ENCODE measurements at regions of chr22 and their contacts with region 1.

Region 1: DNA sequence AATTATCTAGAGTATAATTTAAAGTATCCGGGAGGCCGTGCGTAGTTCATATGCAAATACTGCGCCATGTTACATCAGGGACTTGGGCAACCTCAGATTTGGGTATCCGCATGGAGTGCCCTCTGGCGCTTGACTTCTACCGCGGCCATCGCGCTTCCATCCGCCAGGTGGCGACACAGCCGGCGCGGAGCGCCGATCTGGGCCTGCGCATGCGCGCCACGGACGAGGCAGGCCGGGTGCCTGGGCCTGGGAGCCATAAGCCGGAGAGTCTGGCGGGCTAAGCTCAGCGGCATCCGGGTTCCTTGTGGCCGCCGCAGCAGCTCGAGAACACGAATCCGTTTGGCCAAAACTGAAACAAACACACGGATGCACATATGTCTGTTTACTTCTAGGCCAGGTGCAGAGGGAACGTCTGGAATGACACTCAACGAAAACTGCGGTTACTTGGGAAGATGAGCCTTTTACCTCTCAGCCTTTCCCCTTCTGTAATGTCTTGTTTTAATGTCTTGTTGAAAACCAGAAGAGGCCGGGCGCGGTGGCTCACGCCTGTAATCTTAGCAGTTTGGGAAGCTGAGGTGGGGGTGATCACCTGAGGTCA is 21.9 kb downstream of the SNU13 start:
- DNase-seq: peak; percentile 95
- ATAC-seq: peak; percentile 97
- H3K4me3 Mint-ChIP-seq: peak overlapping the region; percentile 73
- H3K27ac Mint-ChIP-seq: peak overlapping the region; percentile 95
- H3K4me1 Mint-ChIP-seq: peaks cover 16% of the 10 kb centered on the region
- H3K27me3 Mint-ChIP-seq: no peaks in the 10 kb centered on the region

Region 2: DNA sequence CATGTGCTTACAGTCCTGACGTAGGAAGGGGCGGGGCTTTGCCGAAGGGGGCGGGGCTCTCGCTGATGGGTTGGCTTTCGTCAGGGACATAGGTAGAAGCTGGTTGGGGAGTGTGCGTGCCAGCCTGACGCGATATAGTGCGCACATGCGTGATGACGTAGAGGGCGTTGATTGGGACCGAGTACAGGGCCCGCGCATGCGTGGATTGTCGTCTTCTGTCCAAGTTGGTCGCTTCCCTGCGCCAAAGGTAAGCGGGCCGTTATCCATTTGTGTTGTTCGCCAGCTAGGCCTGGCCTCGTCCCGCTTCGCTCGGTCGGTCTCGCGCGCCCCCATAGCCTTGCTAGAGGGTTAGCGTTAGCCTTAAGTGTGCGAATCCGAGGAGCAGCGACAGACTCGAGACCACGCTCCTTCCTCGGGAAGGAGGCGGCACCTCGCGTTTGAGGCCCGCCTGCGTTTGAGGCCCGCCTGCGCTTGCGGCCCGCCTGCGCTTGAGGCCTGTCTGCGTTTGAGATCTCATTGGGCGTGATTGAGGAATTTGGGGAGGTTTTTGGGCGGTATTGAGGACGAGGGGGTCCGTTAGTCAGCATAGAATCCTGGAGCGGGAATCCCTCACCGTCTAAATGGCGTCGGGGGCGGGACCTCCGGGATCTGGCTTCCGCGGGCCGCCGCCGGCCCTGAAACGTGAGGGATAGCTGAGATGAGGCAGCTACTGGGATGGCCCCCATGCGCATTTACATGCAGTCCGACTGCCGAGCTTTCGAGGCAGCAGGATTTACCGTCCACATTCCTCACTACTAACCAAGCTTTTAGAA is 45.5 kb before region 1 on chr22 and contains the start of gene XRCC6:
- CTCF ChIA-PET with region 1: interaction called, 20 read pairs
- POLR2A ChIA-PET with region 1: interaction called, 3 read pairs
- DNase-seq: peak; percentile 100
- ATAC-seq: peak; percentile 92
- H3K4me3 Mint-ChIP-seq: peak within 1 kb of the TSS; percentile 96
- H3K27ac Mint-ChIP-seq: peak within 1 kb of the TSS; percentile 98
- H3K4me1 Mint-ChIP-seq: peaks cover 46% of the 10 kb centered on the region
- H3K27me3 Mint-ChIP-seq: no peaks in the 10 kb centered on the region
- total RNA-seq, gene XRCC6: 302 to 308 TPM

Region 3: GRCh38 chr22:41648432-41648831 is 18.3 kb before region 1 on chr22:
- CTCF ChIA-PET with region 1: interaction called, 40 read pairs
- POLR2A ChIA-PET with region 1: interaction called, 3 read pairs
- DNase-seq: no peak
- ATAC-seq: no peak
- H3K4me3 Mint-ChIP-seq: no peak overlapping the region
- H3K27ac Mint-ChIP-seq: no peak overlapping the region
- H3K4me1 Mint-ChIP-seq: peaks cover 9% of the 10 kb centered on the region
- H3K27me3 Mint-ChIP-seq: no peaks in the 10 kb centered on the region

Region 4: GRCh38 chr22:41682033-41682807 is 15.5 kb after region 1 on chr22:
- CTCF ChIA-PET with region 1: interaction called, 40 read pairs
- POLR2A ChIA-PET with region 1: interaction called, 4 read pairs
- DNase-seq: peak; percentile 89
- ATAC-seq: peak; percentile 89
- H3K4me3 Mint-ChIP-seq: peak overlapping the region; percentile 97
- H3K27ac Mint-ChIP-seq: peak overlapping the region; percentile 98
- H3K4me1 Mint-ChIP-seq: peaks cover 25% of the 10 kb centered on the region
- H3K27me3 Mint-ChIP-seq: no peaks in the 10 kb centered on the region

Region 5: DNA sequence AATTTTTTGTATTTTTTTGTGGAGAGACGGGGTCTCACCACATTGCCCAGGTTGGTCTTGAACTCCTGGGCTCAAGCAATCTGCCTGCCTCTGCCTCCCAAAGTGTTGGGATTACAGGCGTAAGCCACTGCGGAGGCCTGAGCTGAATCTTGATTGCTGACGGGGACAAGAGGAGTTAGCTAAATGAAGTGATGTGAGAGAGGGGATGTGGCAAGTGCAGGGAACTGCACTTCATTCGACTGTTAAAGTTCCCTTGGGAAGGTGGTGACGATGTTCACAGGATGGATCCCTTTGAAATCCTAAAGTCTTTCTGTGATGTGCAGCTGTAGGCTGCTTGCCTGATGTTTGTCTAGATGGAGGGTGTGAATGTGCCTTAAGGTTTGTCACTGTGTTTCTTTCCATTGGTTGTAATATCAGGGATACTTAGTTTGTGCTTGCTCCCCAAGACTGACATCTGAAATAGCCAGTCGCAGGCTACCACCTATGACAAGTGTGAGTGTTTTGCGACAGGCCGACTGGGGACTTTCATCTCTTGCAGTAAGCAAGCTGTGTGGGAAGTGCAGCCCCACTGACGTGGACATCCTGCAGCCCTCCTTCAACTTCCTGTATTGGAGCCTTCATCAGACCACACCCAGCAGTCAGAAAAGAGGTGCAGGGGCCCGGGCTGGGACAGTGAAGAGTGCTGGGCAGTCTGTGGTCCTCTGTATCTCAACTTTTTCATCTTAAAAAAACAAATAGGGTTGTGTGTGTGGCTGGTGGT is 114.2 kb after region 1 on chr22:
- CTCF ChIA-PET with region 1: interaction called, 12 read pairs
- POLR2A ChIA-PET with region 1: interaction called, 6 read pairs
- DNase-seq: peak; percentile 97
- ATAC-seq: peak; percentile 97
- H3K4me3 Mint-ChIP-seq: peak overlapping the region; percentile 87
- H3K27ac Mint-ChIP-seq: peak overlapping the region; percentile 99
- H3K4me1 Mint-ChIP-seq: peaks cover 40% of the 10 kb centered on the region
- H3K27me3 Mint-ChIP-seq: no peaks in the 10 kb centered on the region

Region 6: DNA sequence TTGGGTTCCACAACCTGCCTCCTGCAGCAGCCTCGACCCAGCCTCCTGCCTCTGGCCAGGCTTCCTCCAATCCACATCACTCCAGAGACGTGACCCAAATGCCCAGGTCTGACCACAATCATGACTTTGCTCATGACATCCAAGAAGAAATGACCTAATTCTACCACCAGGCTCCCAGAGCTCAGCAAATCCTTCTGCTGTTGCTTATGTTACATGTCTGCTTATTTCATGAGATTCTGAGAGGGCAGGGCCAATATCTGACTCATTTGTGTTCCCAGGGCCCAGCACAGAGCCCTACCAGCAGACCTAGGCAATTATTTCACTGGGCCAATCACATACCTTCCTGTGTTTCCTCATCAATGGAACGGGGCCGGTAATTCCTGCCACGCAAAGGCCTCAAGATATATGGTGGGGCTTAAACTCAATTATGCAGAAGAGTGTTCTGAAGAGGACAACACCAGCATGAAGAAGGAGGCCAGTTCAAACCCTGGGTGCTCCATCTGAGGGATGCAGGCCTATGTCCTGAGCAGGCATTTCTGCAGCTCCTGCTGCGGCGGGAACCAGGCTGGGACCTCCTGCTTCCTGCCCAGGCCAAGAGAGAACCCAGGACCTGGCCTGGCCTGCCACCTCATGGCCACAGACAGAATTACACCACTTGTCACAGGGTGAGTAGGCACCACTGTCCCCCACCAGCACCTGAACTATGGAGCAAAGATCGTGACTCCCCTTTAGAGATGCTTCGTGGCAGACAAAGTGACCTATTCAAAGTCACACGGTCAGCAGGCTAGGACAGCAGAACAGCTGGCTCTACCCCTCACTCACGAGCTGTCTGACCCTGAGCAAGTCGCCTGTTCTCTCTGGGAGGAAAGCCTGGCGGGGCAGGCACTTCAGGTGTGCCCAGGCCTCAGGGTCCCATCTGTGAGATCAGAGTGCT is 274.3 kb after region 1 on chr22:
- CTCF ChIA-PET with region 1: interaction called, 24 read pairs
- POLR2A ChIA-PET with region 1: interaction called, 7 read pairs
- DNase-seq: peak; percentile 90
- ATAC-seq: peak; percentile 61
- H3K4me3 Mint-ChIP-seq: peak overlapping the region; percentile 27
- H3K27ac Mint-ChIP-seq: peak overlapping the region; percentile 95
- H3K4me1 Mint-ChIP-seq: peaks cover 58% of the 10 kb centered on the region
- H3K27me3 Mint-ChIP-seq: no peaks in the 10 kb centered on the region

Region 7: GRCh38 chr22:41998361-41999275 is 331.9 kb after region 1 on chr22 and contains the start of gene WBP2NL:
- CTCF ChIA-PET with region 1: no interaction called
- POLR2A ChIA-PET with region 1: no interaction called
- DNase-seq: peak; percentile 89
- ATAC-seq: peak; percentile 92
- H3K4me3 Mint-ChIP-seq: peak within 1 kb of the TSS; percentile 86
- H3K27ac Mint-ChIP-seq: peak within 1 kb of the TSS; percentile 95
- H3K4me1 Mint-ChIP-seq: peaks cover 29% of the 10 kb centered on the region
- H3K27me3 Mint-ChIP-seq: peaks cover 23% of the 10 kb centered on the region
- total RNA-seq, gene WBP2NL: 1.1 to 1.3 TPM